Panc1 (cell line): ENCODE measurements at regions of chr9 and their contacts with region 1.

Region 1: GRCh38 chr9:78973889-78974288 is 597.9 kb upstream of the TLE4 start:
- DNase-seq: no peak
- ATAC-seq: no peak
- H3K4me3 ChIP-seq: no peak overlapping the region
- H3K27ac ChIP-seq: no peak overlapping the region
- H3K4me1 ChIP-seq: no peaks in the 10 kb centered on the region
- H3K27me3 ChIP-seq: no peaks in the 10 kb centered on the region
- CTCF ChIP-seq: no peak

Region 2: GRCh38 chr9:78618735-78619134 is 355.2 kb before region 1 on chr9:
- CTCF ChIA-PET with region 1: no interaction called
- POLR2A ChIA-PET with region 1: interaction called, 13 read pairs
- in situ Hi-C with region 1: no loop called
- intact Hi-C with region 1: no loop called
- DNase-seq: no peak
- ATAC-seq: no peak
- H3K4me3 ChIP-seq: no peak overlapping the region
- H3K27ac ChIP-seq: no peak overlapping the region
- H3K4me1 ChIP-seq: no peaks in the 10 kb centered on the region
- H3K27me3 ChIP-seq: no peaks in the 10 kb centered on the region
- CTCF ChIP-seq: no peak

Region 3: GRCh38 chr9:79026316-79026715 is 52.4 kb after region 1 on chr9:
- CTCF ChIA-PET with region 1: no interaction called
- POLR2A ChIA-PET with region 1: no interaction called
- in situ Hi-C with region 1: no loop called
- intact Hi-C with region 1: no loop called
- DNase-seq: no peak
- ATAC-seq: no peak
- H3K4me3 ChIP-seq: no peak overlapping the region
- H3K27ac ChIP-seq: no peak overlapping the region
- H3K4me1 ChIP-seq: no peaks in the 10 kb centered on the region
- H3K27me3 ChIP-seq: no peaks in the 10 kb centered on the region
- CTCF ChIP-seq: no peak